Natural killer cell (primary cell): ENCODE measurements at regions of chr11 and their contacts with region 1.

Region 1: DNA sequence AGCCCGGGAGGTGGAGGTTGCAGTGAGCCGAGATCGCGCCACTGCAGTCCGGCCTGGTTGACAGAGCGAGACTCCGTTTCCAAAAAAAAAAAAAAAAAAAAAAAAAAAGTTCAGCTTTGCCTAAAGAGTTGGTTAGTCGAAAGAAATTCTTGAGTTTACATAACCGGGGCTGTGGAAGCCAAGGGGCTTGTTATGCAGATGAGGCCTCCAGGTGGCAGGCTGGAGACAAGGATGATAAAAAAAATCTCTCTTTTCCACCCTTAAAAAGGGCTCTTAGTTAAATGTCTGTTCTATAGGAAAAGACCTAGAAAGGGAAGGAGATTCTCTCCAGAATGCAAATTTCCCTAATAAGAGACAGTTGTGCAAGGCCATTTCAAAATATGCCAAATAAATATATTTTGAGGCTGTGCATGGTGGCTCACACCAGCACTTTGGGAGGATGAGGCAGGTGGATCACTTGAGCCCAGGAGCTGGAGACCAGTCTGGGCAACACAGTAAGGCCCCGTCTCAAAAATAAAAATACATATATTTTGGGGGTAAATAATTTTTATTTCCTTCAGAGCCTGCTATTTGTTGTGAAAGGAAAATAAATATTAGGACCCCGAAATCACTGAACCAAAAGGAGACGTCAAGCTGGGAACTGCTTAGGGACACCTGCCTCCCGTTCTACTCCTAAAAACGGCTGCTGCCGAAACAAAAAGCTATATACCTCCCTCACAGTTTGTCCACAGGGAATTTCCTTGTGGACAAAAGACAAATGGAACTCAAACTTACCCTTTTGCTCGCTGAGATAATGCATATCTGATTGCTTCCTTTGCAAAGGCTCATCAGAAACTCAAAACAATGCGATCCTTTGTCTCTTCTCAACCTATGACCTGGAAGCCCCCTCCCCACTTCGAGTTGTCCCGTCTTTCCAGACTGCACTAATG is 2.4 kb upstream of the IFITM2 start:
- DNase-seq: peak in 1 of 2 donors; percentile 84
- ATAC-seq: peak in 2 of 3 donors; percentile 45 to 59
- H3K4me3 ChIP-seq: no peak overlapping the region
- H3K4me3 Mint-ChIP-seq: peak overlapping the region; percentile 65
- H3K27ac ChIP-seq: no peak overlapping the region
- H3K27ac Mint-ChIP-seq: peak overlapping the region; percentile 81 to 98
- H3K4me1 ChIP-seq: peaks cover 47% of the 10 kb centered on the region
- H3K4me1 Mint-ChIP-seq: peaks cover 51% of the 10 kb centered on the region in 2 donors
- H3K27me3 ChIP-seq: no peaks in the 10 kb centered on the region
- H3K27me3 Mint-ChIP-seq: no peaks in the 10 kb centered on the region
- CTCF ChIP-seq: peak; percentile 77

Region 2: GRCh38 chr11:250740-251299 is 54.4 kb before region 1 on chr11:
- intact Hi-C with region 1: loop called (anchors 5 kb)
- DNase-seq: peak; percentile 73 to 90
- ATAC-seq: peak; percentile 93 to 100 (median 97)
- H3K4me3 ChIP-seq: no peak overlapping the region
- H3K4me3 Mint-ChIP-seq: no peak overlapping the region
- H3K27ac ChIP-seq: no peak overlapping the region
- H3K27ac Mint-ChIP-seq: peak overlapping the region in 1 of 2 donors; percentile 40
- H3K4me1 ChIP-seq: peaks cover 5% of the 10 kb centered on the region
- H3K4me1 Mint-ChIP-seq: peaks cover 0 to 13% of the 10 kb centered on the region in 2 donors
- H3K27me3 ChIP-seq: no peaks in the 10 kb centered on the region
- H3K27me3 Mint-ChIP-seq: no peaks in the 10 kb centered on the region
- CTCF ChIP-seq: peak; percentile 67

Region 3: GRCh38 chr11:355581-356458 is 50.6 kb after region 1 on chr11:
- intact Hi-C with region 1: loop called (anchors 5 kb)
- DNase-seq: peak; percentile 64 to 93
- ATAC-seq: peak; percentile 19 to 61 (median 58)
- H3K4me3 ChIP-seq: peak overlapping the region; percentile 11
- H3K4me3 Mint-ChIP-seq: peak overlapping the region; percentile 57
- H3K27ac ChIP-seq: peak overlapping the region; percentile 83
- H3K27ac Mint-ChIP-seq: peak overlapping the region; percentile 78
- H3K4me1 ChIP-seq: peaks cover 74% of the 10 kb centered on the region
- H3K4me1 Mint-ChIP-seq: peaks cover 41 to 57% of the 10 kb centered on the region in 2 donors
- H3K27me3 ChIP-seq: no peaks in the 10 kb centered on the region
- H3K27me3 Mint-ChIP-seq: no peaks in the 10 kb centered on the region
- CTCF ChIP-seq: no peak

Region 4: GRCh38 chr11:390175-390574 is 85.0 kb after region 1 on chr11:
- intact Hi-C with region 1: no loop called
- DNase-seq: no peak
- ATAC-seq: no peak
- H3K4me3 ChIP-seq: no peak overlapping the region
- H3K4me3 Mint-ChIP-seq: no peak overlapping the region
- H3K27ac ChIP-seq: no peak overlapping the region
- H3K27ac Mint-ChIP-seq: no peak overlapping the region
- H3K4me1 ChIP-seq: peaks cover 27% of the 10 kb centered on the region
- H3K4me1 Mint-ChIP-seq: peaks cover 18 to 24% of the 10 kb centered on the region in 2 donors
- H3K27me3 ChIP-seq: no peaks in the 10 kb centered on the region
- H3K27me3 Mint-ChIP-seq: peaks cover 0 to 3% of the 10 kb centered on the region in 2 donors
- CTCF ChIP-seq: no peak